Activated T-helper 1 cell treated with anti-CD3 and anti-CD28 coated beads, Interleukin-12 subunit alpha, Interleukin-12 subunit beta, Interleukin-2, Interleukin-4 antibody, amounts not matched to agents 30 ng/mL and 10 ng/mL and 1 ng/mL, durations not matched to agents 14 hours and 24 hours and 36 hours (primary cell): ENCODE measurements at regions of chr3 and their contacts with region 1.

Region 1: DNA sequence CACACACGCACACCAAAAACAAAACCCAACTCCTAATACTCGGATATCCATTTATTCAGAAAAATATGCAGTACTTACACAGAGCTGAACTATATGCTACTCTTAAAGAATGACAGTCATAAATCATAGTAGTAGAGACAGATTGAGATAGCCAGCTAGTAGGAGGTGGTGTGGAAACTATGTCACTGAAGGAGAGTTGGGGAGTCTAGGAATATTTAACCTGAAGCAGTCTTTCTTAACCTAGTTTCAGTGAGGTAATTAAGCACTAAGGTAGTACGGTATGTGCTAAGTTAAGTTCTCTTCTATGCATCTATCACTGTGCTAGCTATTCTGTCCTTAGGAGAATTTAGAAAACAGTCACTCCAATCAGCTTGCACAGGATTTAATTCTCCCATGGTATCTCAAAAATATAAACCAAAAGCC is 54.2 kb downstream of the ANKRD28 start:
- DNase-seq: no peak
- H3K4me3 Mint-ChIP-seq: no peak overlapping the region
- H3K27ac Mint-ChIP-seq: peak overlapping the region; percentile 55
- H3K4me1 Mint-ChIP-seq: peaks cover 51% of the 10 kb centered on the region
- H3K27me3 Mint-ChIP-seq: no peaks in the 10 kb centered on the region

Region 2: GRCh38 chr3:15578289-15578867 is 165.2 kb before region 1 on chr3:
- intact Hi-C with region 1: no loop called
- DNase-seq: no peak
- H3K4me3 Mint-ChIP-seq: no peak overlapping the region
- H3K27ac Mint-ChIP-seq: no peak overlapping the region
- H3K4me1 Mint-ChIP-seq: no peaks in the 10 kb centered on the region
- H3K27me3 Mint-ChIP-seq: no peaks in the 10 kb centered on the region

Region 3: DNA sequence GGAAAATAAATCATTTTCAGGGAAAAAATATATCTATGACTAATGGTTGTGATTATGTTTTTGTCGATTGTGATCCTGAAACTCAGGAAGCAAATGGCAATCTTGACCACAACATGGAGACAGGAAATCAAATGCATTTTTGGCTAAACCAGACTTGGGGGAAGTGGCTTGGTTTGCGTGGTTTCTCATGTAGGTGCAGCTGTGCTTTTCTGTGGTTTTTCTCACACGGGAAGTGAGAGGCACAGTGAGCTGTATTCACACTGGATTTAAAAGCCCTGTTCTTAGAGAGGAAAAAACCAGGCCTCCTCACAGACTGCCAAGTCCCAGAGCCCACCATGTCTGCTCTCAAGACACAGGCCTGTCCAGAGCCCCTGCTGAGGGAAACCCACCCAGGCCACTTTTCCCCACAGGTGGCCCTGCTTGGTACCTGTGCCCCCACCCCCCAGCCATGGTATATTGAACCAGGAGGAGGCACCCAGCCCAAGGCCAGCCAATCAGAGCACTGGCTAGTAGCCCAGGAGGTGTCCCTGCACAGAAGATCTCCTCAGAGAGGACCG is 95.9 kb before region 1 on chr3:
- intact Hi-C with region 1: no loop called
- DNase-seq: peak; percentile 63
- H3K4me3 Mint-ChIP-seq: peak overlapping the region; percentile 60
- H3K27ac Mint-ChIP-seq: peak overlapping the region; percentile 57
- H3K4me1 Mint-ChIP-seq: peaks cover 52% of the 10 kb centered on the region
- H3K27me3 Mint-ChIP-seq: peaks cover 7% of the 10 kb centered on the region

Region 4: GRCh38 chr3:15726043-15726442 is 17.6 kb before region 1 on chr3:
- intact Hi-C with region 1: loop called (anchors 1 kb)
- DNase-seq: no peak
- H3K4me3 Mint-ChIP-seq: no peak overlapping the region
- H3K27ac Mint-ChIP-seq: peak overlapping the region; percentile 50
- H3K4me1 Mint-ChIP-seq: peaks cover 32% of the 10 kb centered on the region
- H3K27me3 Mint-ChIP-seq: no peaks in the 10 kb centered on the region

Region 5: DNA sequence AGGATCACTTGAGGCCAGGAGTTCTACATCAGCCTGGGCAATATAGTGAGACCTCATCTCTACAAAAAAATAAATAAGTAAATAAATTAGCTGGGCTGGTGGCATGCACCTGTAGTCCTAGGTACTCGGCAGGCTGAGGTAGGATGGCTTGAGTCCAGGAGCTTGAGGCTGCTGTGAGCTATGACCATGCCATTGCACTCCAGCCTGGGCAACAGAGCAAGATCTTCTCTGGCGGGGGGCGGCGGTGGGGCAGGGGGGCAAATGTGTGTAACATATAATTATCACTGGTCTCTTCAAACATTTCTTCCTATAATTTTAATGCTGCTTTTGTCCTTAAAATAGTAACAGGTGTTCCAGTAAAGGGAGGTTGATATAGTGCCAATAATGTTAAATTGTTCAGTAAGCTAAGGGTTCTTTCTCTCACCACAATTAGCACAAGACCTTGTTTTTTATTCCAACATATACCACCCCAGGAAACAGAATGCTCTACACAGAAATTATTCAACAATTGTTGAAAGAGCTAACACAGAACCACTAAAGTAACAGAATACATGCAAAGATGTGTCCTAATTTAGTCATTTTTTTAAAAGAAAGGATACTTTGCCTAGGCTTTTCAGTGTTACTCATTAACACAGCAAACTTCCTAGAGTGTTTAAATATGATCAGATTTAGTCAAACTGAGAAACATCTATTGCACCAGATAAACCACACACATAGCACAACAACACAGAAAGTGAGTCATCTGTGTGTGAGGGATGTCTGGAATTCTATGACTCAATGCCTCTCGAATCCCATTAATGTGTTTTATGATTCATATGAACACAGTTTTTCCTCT is 25.0 kb after region 1 on chr3:
- intact Hi-C with region 1: loop called (anchors 1 kb)
- DNase-seq: no peak
- H3K4me3 Mint-ChIP-seq: peak overlapping the region; percentile 12
- H3K27ac Mint-ChIP-seq: peak overlapping the region; percentile 75
- H3K4me1 Mint-ChIP-seq: peaks cover 50% of the 10 kb centered on the region
- H3K27me3 Mint-ChIP-seq: no peaks in the 10 kb centered on the region

Region 6: DNA sequence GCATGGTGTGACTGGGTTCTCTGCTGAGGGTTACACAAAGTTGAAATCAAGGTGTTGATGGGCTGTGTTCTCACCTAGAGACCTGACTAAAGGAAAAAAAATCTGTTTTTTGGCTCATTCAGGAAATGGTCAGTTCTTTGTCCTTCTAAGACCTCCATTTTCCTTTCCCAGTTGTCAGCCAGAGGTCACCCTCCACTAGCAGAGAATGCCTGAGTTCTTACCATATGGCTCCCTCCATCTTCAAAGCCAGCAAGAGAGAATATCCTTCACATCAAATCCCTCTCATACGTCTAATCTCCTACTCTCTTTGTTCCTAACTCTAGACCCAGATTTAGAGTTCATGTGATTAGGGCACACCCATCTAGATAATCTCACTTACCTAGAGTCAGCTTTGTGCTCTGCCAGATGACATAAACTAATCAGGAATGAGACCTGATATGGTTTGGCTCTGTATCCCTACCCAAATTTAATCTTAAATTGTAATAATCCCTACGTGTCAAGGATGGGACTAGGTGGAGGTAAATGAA is 34.8 kb after region 1 on chr3:
- intact Hi-C with region 1: loop called (anchors 1 kb)
- DNase-seq: no peak
- H3K4me3 Mint-ChIP-seq: no peak overlapping the region
- H3K27ac Mint-ChIP-seq: no peak overlapping the region
- H3K4me1 Mint-ChIP-seq: peaks cover 33% of the 10 kb centered on the region
- H3K27me3 Mint-ChIP-seq: no peaks in the 10 kb centered on the region

Region 7: GRCh38 chr3:15839568-15839967 is 96.0 kb after region 1 on chr3:
- intact Hi-C with region 1: no loop called
- DNase-seq: no peak
- H3K4me3 Mint-ChIP-seq: no peak overlapping the region
- H3K27ac Mint-ChIP-seq: no peak overlapping the region
- H3K4me1 Mint-ChIP-seq: peaks cover under 1% of the 10 kb centered on the region
- H3K27me3 Mint-ChIP-seq: peaks cover 2% of the 10 kb centered on the region